ENCODE measurements at regions of chr12 and their contacts with region 1.

Region 1: DNA sequence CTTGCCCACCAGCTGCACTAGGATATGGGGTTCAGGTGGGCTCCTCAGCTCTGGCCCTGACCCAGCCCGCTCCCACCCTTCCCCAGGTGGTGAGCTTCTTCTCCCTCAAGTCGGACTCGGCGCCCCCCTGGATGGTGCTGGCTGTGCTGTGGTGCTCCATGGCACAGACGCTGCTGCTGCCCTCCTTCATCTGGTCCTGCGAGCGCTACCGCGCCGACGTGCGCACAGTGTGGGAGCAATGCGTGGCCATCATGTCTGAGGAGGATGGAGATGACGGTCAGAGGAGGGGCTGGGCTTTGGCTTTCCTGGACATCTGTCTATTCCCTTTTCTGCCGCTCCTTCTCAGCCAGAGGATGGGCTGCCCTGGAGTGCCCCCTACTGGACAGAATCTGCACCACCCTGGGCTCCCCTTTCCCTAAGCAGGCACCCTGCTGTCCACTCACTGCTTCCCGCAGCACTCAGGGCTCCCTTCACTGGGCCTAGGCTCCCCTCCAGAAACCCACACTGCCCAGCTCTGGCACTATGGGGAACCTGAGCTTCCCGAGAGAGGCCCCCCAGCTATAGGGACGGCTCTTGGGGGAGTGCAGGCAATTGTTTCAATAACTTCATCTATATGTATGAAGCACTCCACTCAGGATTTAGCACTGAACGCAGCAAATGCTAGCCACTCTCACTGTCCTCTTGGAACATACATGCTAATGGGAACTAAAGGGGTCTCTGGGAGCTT is 2.6 kb upstream of the P3H3 start:
- DNase-seq: peak; percentile 91
- ATAC-seq: peak; percentile 64
- H3K4me3 Mint-ChIP-seq: no peak overlapping the region
- H3K27ac Mint-ChIP-seq: peak overlapping the region; percentile 16
- H3K4me1 Mint-ChIP-seq: peaks cover 36% of the 10 kb centered on the region
- H3K27me3 Mint-ChIP-seq: peaks cover 32% of the 10 kb centered on the region

Region 2: GRCh38 chr12:6620137-6620884 is 205.2 kb before region 1 on chr12:
- CTCF ChIA-PET with region 1: no interaction called
- POLR2A ChIA-PET with region 1: no interaction called
- intact Hi-C with region 1: loop called in 1 of 2 experiments (anchors 1 kb)
- DNase-seq: peak; percentile 82
- ATAC-seq: peak; percentile 82
- H3K4me3 Mint-ChIP-seq: peak overlapping the region; percentile 67
- H3K27ac Mint-ChIP-seq: peak overlapping the region; percentile 73
- H3K4me1 Mint-ChIP-seq: peaks cover 8% of the 10 kb centered on the region
- H3K27me3 Mint-ChIP-seq: no peaks in the 10 kb centered on the region

Region 3: DNA sequence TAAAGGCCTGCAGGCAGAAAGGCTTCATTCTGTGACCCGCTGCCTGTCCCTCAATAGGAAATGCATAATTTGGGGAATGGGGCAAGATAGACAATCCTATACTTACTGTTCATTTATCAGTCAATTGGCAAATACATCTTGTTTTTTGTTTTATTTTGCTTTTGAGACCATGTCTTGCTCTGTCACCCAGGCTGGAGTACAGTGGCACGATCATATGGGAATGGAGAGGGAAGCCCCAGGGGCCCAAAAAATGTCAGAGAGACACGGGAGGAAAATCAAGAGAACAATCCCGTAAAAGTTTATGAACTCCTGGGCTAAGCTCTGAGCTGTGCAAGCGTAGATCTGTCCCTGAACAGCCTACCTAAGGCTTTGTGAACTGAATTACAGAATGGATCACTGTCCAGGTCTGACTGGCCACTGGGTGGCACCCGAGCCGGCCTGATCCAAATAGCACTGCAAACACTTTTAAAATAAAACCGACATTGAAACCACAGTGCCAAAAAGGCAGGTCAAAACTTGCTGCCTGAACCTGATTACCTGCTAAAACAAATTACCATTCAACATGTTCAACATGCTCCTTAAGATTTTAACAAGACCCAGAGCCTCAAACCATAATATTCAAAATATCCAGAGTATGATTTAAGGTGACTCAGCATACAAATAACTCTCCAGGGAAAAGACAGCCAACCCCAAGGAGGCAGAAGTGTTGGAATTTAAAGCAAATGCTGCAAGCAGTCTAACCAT is 89.9 kb before region 1 on chr12:
- CTCF ChIA-PET with region 1: interaction called, 3 read pairs
- POLR2A ChIA-PET with region 1: no interaction called
- intact Hi-C with region 1: loop called in 1 of 2 experiments (anchors 1 kb)
- DNase-seq: peak; percentile 72
- ATAC-seq: peak; percentile 81
- H3K4me3 Mint-ChIP-seq: no peak overlapping the region
- H3K27ac Mint-ChIP-seq: no peak overlapping the region
- H3K4me1 Mint-ChIP-seq: peaks cover 6% of the 10 kb centered on the region
- H3K27me3 Mint-ChIP-seq: no peaks in the 10 kb centered on the region